PC-9 (cell line): ENCODE measurements at regions of chr11 and their contacts with region 1.

Region 1: GRCh38 chr11:69296890-69297786 is 3.2 kb downstream of the MYEOV start:
- DNase-seq: peak; percentile 99
- H3K4me3 ChIP-seq: peak overlapping the region; percentile 97
- H3K27ac ChIP-seq: peak overlapping the region; percentile 98
- H3K4me1 ChIP-seq: peaks cover 55% of the 10 kb centered on the region
- H3K27me3 ChIP-seq: no peaks in the 10 kb centered on the region
- CTCF ChIP-seq: no peak

Region 2: GRCh38 chr11:69101115-69101791 is 195.9 kb before region 1 on chr11:
- CTCF ChIA-PET with region 1: interaction called, 7 read pairs
- POLR2A ChIA-PET with region 1: interaction called, 7 read pairs
- intact Hi-C with region 1: loop called (anchors 1 kb)
- DNase-seq: peak; percentile 82 to 91
- H3K4me3 ChIP-seq: no peak overlapping the region
- H3K27ac ChIP-seq: no peak overlapping the region
- H3K4me1 ChIP-seq: peaks cover 26% of the 10 kb centered on the region
- H3K27me3 ChIP-seq: no peaks in the 10 kb centered on the region
- CTCF ChIP-seq: peak; percentile 99

Region 3: GRCh38 chr11:69240332-69241074 is 56.6 kb before region 1 on chr11:
- CTCF ChIA-PET with region 1: no interaction called
- POLR2A ChIA-PET with region 1: no interaction called
- intact Hi-C with region 1: loop called (anchors 2 kb)
- DNase-seq: no peak
- H3K4me3 ChIP-seq: no peak overlapping the region
- H3K27ac ChIP-seq: no peak overlapping the region
- H3K4me1 ChIP-seq: no peaks in the 10 kb centered on the region
- H3K27me3 ChIP-seq: no peaks in the 10 kb centered on the region
- CTCF ChIP-seq: peak; percentile 66

Region 4: DNA sequence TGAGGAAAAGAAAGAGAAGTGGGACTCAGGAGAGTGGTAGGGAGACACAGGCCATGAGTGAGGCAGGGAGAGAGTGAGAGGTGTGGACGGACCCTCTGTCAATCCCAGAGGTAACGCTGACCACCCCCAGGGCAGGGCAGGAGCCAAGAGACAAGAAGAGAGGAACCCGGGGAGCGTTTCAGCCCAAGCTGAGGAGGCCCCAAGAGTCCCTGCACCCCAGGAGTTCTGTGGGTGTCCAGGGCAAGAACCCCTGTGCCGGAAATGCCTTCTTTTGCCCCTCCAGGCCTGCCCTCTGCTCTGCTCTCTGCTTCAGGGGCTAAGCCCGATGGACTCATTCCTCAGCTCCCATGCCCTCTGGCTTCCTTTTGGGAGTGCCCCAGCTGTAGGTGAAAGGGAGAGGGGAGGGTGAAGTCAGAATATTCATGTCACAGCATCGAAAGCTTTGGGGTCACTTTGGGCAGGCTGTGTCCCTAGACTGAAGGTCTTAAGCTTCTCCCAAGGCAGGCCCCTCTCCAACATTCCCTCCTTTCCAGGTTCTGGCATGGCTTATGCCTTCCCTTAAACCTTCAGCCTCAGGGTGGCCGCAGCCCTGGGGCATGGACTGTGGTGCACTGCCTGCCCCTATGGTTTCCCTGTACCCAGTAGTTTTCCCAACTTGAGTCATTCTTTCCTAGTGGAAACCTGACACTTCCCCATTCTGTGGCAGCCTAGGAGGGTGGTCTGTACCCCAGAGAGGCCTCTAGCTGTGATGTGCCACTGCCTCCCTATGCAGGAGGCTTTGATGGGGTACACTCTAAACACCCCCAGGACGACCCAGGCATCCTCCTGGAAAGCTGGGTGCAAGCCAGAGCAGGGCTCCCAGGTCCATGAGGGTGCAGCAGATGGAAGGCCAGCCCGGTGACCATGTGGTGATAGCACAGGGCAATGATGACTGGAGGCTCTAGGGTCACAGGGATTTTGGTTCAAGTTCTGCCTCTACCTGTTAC is 23.9 kb after region 1 on chr11:
- CTCF ChIA-PET with region 1: no interaction called
- POLR2A ChIA-PET with region 1: interaction called, 3 read pairs
- intact Hi-C with region 1: loop called (anchors 1 kb)
- DNase-seq: peak; percentile 52 to 79
- H3K4me3 ChIP-seq: peak overlapping the region; percentile 45; the same call in 1 of the 2 replicates
- H3K27ac ChIP-seq: peak overlapping the region; percentile 93
- H3K4me1 ChIP-seq: peaks cover 73% of the 10 kb centered on the region
- H3K27me3 ChIP-seq: no peaks in the 10 kb centered on the region
- CTCF ChIP-seq: no peak

Region 5: DNA sequence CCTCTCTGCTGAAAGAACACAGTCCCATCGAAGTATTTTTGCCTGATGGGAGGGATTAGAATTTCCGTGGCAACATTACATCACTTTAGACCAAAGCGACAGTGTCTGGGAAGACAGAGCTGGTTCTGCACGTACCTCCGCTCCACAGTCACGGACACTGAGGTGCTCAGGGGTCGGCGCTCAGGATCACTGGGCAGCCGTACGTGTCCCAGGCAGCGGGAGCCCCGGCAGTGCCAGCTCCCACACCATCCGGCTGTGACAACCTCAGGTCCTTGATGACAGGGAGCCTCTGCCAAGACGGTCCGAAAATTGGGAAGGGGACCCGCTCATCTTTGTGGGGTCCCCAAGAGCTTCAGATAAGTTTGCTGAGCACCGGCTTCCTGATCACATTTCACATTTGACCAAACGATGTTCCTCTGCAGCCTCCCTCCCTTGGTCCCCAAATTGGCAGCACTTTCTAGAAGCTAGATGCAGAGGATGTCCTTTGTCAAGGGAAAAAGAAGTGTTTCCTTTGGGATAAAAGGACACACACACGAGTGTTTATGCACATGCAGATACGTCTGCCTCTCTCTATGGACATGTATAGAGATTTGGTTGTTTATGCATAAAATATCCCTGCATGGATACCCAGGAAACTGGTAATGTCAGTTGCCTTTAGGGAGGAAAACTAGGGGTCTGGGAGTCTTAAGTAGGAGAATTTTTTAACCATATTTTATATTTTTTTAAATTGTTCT is 122.7 kb after region 1 on chr11:
- CTCF ChIA-PET with region 1: interaction called, 4 read pairs
- POLR2A ChIA-PET with region 1: no interaction called
- intact Hi-C with region 1: loop called (anchors 1 kb)
- DNase-seq: no peak
- H3K4me3 ChIP-seq: no peak overlapping the region; the same call in 1 of the 2 replicates
- H3K27ac ChIP-seq: peak overlapping the region; percentile 89
- H3K4me1 ChIP-seq: peaks cover 28% of the 10 kb centered on the region
- H3K27me3 ChIP-seq: no peaks in the 10 kb centered on the region
- CTCF ChIP-seq: no peak

Region 6: GRCh38 chr11:69524282-69524911 is 227.3 kb after region 1 on chr11:
- CTCF ChIA-PET with region 1: no interaction called
- POLR2A ChIA-PET with region 1: no interaction called
- intact Hi-C with region 1: loop called (anchors 10 kb)
- DNase-seq: peak in 1 of 2 experiments; percentile 89
- H3K4me3 ChIP-seq: no peak overlapping the region
- H3K27ac ChIP-seq: no peak overlapping the region
- H3K4me1 ChIP-seq: no peaks in the 10 kb centered on the region
- H3K27me3 ChIP-seq: peaks cover 5% of the 10 kb centered on the region; the same call in 1 of the 2 replicates
- CTCF ChIP-seq: no peak